T-cell (primary cell): ENCODE measurements at regions of chr17 and their contacts with region 1.

Region 1: DNA sequence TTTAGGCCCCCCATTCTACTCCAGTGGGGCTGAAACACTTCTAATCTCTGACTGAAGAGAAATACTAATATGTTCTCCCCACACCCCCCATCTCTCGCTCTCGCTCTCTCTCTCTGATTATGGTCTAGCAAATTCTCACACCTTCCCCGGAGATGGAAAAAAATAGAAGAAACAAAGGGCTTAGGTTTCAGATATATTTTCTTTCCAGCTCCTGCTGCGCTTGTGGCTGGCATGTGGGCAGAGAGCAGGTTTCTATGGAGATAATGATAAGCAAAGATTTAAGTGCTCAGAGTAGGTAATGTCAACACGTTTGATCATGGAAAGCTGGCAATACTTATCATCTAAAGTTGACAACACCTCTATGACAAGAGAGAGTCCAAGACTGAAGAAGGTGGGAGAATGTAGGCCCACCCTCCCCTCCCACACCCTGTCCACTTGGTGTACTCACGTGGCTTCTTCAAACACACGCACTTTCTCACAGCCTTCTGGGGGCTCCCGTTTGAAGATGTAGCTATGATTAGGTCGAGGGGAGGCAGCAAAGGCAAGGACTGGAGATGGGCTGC is 8.0 kb upstream of the SLC35B1 start:
- DNase-seq: peak in 30 of 35 experiments; percentile 18 to 82 (median 45)
- ATAC-seq: peak; percentile 32 to 80 (median 46)
- H3K4me3 ChIP-seq: no peak overlapping the region
- H3K4me3 Mint-ChIP-seq: peak overlapping the region; percentile 1 to 50 (median 26)
- H3K27ac ChIP-seq: peak overlapping the region; percentile 92
- H3K27ac Mint-ChIP-seq: peak overlapping the region; percentile 91 to 93
- H3K4me1 ChIP-seq: peaks cover 0 to 52% of the 10 kb centered on the region in 2 experiments
- H3K4me1 Mint-ChIP-seq: peaks cover 28 to 51% (median 40%) of the 10 kb centered on the region in 3 donors
- H3K27me3 ChIP-seq: no peaks in the 10 kb centered on the region
- H3K27me3 Mint-ChIP-seq: no peaks in the 10 kb centered on the region

Region 2: DNA sequence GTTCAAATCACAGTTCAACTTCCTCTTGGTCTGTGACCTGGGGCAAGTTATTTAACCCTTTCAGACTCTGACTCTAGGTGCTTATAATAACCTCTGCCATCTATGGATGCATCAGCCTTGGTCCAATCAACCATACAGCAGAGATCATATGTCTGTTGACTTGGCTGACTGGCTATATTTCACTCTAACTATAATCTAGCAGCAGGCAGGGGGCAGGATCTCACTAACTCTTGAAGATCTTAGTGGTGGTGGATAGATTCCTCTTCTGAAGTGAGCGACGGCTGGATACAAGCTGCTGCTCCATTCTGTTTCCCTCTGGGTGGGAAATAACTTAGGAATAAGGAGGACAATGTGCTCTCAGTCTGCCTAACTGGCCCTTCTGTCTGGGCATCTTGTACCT is 1432.4 kb before region 1 on chr17:
- CTCF ChIA-PET with region 1: no interaction called
- POLR2A ChIA-PET with region 1: no interaction called
- DNase-seq: no peak
- ATAC-seq: no peak
- H3K4me3 ChIP-seq: no peak overlapping the region
- H3K4me3 Mint-ChIP-seq: no peak overlapping the region
- H3K27ac ChIP-seq: no peak overlapping the region
- H3K27ac Mint-ChIP-seq: no peak overlapping the region
- H3K4me1 ChIP-seq: no peaks in the 10 kb centered on the region
- H3K4me1 Mint-ChIP-seq: peaks cover 20 to 31% (median 22%) of the 10 kb centered on the region in 3 donors
- H3K27me3 ChIP-seq: no peaks in the 10 kb centered on the region
- H3K27me3 Mint-ChIP-seq: no peaks in the 10 kb centered on the region

Region 3: GRCh38 chr17:49125449-49125848 is 590.3 kb before region 1 on chr17:
- CTCF ChIA-PET with region 1: no interaction called
- POLR2A ChIA-PET with region 1: no interaction called
- DNase-seq: no peak
- ATAC-seq: no peak
- H3K4me3 ChIP-seq: no peak overlapping the region
- H3K4me3 Mint-ChIP-seq: no peak overlapping the region
- H3K27ac ChIP-seq: no peak overlapping the region
- H3K27ac Mint-ChIP-seq: no peak overlapping the region
- H3K4me1 ChIP-seq: no peaks in the 10 kb centered on the region
- H3K4me1 Mint-ChIP-seq: no peaks in the 10 kb centered on the region
- H3K27me3 ChIP-seq: peaks cover 0 to 14% of the 10 kb centered on the region in 2 experiments
- H3K27me3 Mint-ChIP-seq: peaks cover 37 to 41% of the 10 kb centered on the region in 2 donors

Region 4: DNA sequence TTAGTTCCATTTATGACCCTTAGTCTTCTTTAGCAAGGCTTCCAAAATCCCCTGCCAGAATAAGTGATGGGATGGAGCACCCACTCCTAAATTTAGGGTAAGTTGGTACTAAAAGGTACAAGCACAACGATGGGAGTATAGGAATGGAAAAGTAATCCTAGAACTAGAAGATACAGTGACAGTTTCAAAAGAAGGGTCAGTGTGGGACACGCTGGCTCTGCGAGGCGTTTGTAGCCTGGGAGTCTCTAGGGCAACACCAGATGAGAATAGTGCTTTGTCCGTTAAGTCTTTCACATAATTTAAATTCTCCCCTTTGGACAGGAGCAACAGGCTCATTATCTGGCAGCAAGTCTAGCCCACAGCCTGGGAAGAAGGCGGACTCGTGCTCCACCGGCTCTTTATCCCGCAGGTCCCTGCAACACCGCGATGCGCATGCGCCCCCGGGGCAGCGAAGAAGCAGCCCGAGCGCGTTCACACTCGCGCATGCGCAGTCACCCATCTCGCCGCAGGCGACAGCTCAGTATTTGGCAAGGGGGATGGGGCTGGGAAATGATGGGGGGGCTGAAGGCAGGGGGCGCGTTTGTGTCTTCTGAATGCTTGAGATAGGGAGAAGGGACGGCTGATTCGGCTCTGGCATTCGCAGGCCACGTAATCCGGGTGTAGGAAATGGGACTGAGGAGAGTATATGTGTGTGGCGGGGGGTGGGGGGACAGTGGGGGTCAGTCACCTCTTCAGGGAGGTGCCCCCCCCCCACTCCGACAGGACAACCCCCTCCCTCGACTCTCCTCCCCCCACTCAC is 38.5 kb before region 1 on chr17:
- CTCF ChIA-PET with region 1: interaction called in 1 of 2 experiments, 9 read pairs
- POLR2A ChIA-PET with region 1: interaction called in 1 of 2 experiments, 10 read pairs
- DNase-seq: peak; percentile 87 to 98 (median 93)
- ATAC-seq: peak; percentile 62 to 67 (median 66)
- H3K4me3 ChIP-seq: peak overlapping the region; percentile 82 to 89
- H3K4me3 Mint-ChIP-seq: peak overlapping the region; percentile 79 to 91 (median 89)
- H3K27ac ChIP-seq: peak overlapping the region; percentile 99
- H3K27ac Mint-ChIP-seq: peak overlapping the region; percentile 95 to 98
- H3K4me1 ChIP-seq: peaks cover 24 to 31% of the 10 kb centered on the region in 2 experiments
- H3K4me1 Mint-ChIP-seq: peaks cover 49 to 57% (median 50%) of the 10 kb centered on the region in 3 donors
- H3K27me3 ChIP-seq: no peaks in the 10 kb centered on the region
- H3K27me3 Mint-ChIP-seq: no peaks in the 10 kb centered on the region

Region 5: GRCh38 chr17:49739641-49740271 is 24.0 kb after region 1 on chr17:
- CTCF ChIA-PET with region 1: interaction called, 5 to 9 read pairs
- POLR2A ChIA-PET with region 1: interaction called in 1 of 2 experiments, 10 read pairs
- DNase-seq: peak; percentile 91 to 100 (median 99)
- ATAC-seq: peak; percentile 97 to 99 (median 98)
- H3K4me3 ChIP-seq: peak overlapping the region; percentile 46 to 63
- H3K4me3 Mint-ChIP-seq: peak overlapping the region; percentile 82 to 95 (median 89)
- H3K27ac ChIP-seq: peak overlapping the region; percentile 98
- H3K27ac Mint-ChIP-seq: peak overlapping the region; percentile 100
- H3K4me1 ChIP-seq: peaks cover 72 to 87% of the 10 kb centered on the region in 2 experiments
- H3K4me1 Mint-ChIP-seq: peaks cover 82 to 91% (median 86%) of the 10 kb centered on the region in 3 donors
- H3K27me3 ChIP-seq: no peaks in the 10 kb centered on the region
- H3K27me3 Mint-ChIP-seq: no peaks in the 10 kb centered on the region

Region 6: DNA sequence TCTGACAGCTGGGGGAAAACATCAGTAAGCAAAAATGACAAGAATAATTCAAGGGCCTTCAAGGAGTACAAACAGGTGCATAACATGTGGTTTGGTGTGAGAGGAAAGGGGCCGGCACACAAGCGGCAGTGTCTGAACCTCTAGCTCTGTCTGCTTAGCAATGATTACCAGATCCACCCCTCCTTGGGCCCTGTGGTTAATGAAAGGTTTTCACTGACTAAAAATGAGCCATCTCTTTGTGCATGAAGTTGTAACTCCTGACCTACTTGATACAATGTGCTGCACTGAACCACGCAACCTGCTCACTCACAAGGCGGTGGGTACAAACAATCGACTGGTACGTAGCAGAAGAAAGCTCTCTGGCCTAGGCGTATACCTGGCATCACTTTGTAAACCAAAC is 33.0 kb after region 1 on chr17:
- CTCF ChIA-PET with region 1: interaction called in 1 of 2 experiments, 12 read pairs
- POLR2A ChIA-PET with region 1: interaction called in 1 of 2 experiments, 12 read pairs
- DNase-seq: peak in 34 of 35 experiments; percentile 19 to 78 (median 56)
- ATAC-seq: peak; percentile 70 to 78 (median 74)
- H3K4me3 ChIP-seq: no peak overlapping the region
- H3K4me3 Mint-ChIP-seq: peak overlapping the region; percentile 50 to 64 (median 63)
- H3K27ac ChIP-seq: peak overlapping the region; percentile 97
- H3K27ac Mint-ChIP-seq: peak overlapping the region; percentile 96 to 98
- H3K4me1 ChIP-seq: peaks cover 53 to 89% of the 10 kb centered on the region in 2 experiments
- H3K4me1 Mint-ChIP-seq: peaks cover 62 to 90% (median 89%) of the 10 kb centered on the region in 3 donors
- H3K27me3 ChIP-seq: no peaks in the 10 kb centered on the region
- H3K27me3 Mint-ChIP-seq: no peaks in the 10 kb centered on the region

Region 7: DNA sequence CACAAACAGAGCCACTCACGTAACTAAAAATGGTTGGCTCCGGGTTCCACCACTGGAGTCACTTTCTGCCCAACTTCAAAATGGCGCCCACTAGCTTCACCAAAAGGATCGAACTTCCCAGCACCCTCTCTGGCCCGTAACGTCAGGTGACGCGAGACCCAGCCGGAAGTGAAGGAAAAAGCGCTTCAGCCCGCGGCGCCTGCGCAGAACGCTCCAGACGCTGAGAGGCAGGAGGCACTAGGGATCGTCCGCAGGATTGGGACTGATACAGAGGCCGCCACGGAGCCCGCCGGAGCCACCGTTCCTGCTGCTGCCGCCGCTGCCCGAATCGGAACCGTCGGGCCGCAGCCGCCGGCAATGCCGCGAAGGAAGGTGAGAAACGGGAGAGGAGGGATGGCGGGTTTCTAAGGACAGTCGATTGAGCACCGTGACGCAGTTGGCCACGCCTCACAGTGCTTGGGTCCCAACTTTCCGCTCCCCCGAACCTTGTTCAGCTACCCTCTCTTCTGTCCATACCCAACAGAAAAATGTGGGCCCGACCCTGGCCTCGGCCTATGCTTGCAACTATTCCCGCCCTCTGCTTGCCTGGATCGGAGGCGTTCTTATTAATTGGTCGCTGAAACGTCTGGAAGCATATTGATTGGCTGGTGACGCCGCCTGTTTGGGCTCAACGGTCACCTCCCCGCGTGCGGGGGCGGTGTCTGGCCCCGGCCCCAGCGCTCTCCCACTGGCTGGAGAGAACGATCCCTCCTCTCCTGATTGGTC is 72.9 kb after region 1 on chr17 and contains the start of gene KAT7:
- CTCF ChIA-PET with region 1: interaction called in 1 of 2 experiments, 5 read pairs
- POLR2A ChIA-PET with region 1: interaction called, 6 to 11 read pairs
- DNase-seq: peak; percentile 92 to 100 (median 99)
- ATAC-seq: peak; percentile 84 to 88 (median 88)
- H3K4me3 ChIP-seq: peak within 1 kb of the TSS; percentile 95 to 99
- H3K4me3 Mint-ChIP-seq: peak within 1 kb of the TSS; percentile 89 to 99 (median 95)
- H3K27ac ChIP-seq: peak within 1 kb of the TSS; percentile 98
- H3K27ac Mint-ChIP-seq: peak within 1 kb of the TSS; percentile 98 to 99
- H3K4me1 ChIP-seq: peaks cover 16 to 30% of the 10 kb centered on the region in 2 experiments
- H3K4me1 Mint-ChIP-seq: peaks cover 58 to 62% (median 58%) of the 10 kb centered on the region in 3 donors
- H3K27me3 ChIP-seq: no peaks in the 10 kb centered on the region
- H3K27me3 Mint-ChIP-seq: no peaks in the 10 kb centered on the region
- total RNA-seq, gene KAT7: 96.8 to 197 (median 99.7) TPM